Activated CD4-positive, alpha-beta T cell treated with anti-CD3 and anti-CD28 coated beads, Interleukin-2, amount 10 ng/mL, durations not matched to agents 7 days and 5 days (primary cell): ENCODE measurements at regions of chr9 and their contacts with region 1.

Region 1: DNA sequence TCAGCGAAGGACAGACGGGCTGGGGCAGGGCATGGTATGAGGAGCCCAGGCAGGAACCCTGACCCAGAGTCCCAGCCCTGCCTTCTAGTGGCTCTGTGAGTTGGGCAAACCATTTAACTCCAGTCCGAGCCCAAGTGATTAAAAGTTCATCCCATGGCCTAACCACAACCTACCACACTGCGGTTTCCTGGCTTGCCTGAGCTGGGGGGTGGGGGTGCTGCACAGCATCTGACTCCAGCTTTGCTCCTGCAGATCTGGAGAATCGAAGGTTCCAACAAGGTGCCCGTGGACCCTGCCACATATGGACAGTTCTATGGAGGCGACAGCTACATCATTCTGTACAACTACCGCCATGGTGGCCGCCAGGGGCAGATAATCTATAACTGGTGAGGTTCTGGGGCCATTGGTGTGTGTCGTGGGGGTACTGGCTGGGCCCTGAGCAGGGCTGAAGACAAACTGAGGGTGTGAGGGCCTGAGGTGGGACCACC is 49.0 kb downstream of the STOM start:
- DNase-seq: peak; percentile 28
- H3K4me3 Mint-ChIP-seq: no peak overlapping the region
- H3K27ac Mint-ChIP-seq: no peak overlapping the region
- H3K4me1 Mint-ChIP-seq: peaks cover 29% of the 10 kb centered on the region
- H3K27me3 Mint-ChIP-seq: no peaks in the 10 kb centered on the region

Region 2: GRCh38 chr9:120730661-120731514 is 590.2 kb before region 1 on chr9:
- CTCF ChIA-PET with region 1: no interaction called
- POLR2A ChIA-PET with region 1: no interaction called
- DNase-seq: no peak
- H3K4me3 Mint-ChIP-seq: no peak overlapping the region
- H3K27ac Mint-ChIP-seq: no peak overlapping the region
- H3K4me1 Mint-ChIP-seq: peaks cover 20% of the 10 kb centered on the region
- H3K27me3 Mint-ChIP-seq: no peaks in the 10 kb centered on the region

Region 3: GRCh38 chr9:121213136-121213806 is 107.8 kb before region 1 on chr9:
- CTCF ChIA-PET with region 1: interaction called, 15 read pairs
- POLR2A ChIA-PET with region 1: no interaction called
- DNase-seq: peak; percentile 66
- H3K4me3 Mint-ChIP-seq: no peak overlapping the region
- H3K27ac Mint-ChIP-seq: peak overlapping the region; percentile 25
- H3K4me1 Mint-ChIP-seq: peaks cover 24% of the 10 kb centered on the region
- H3K27me3 Mint-ChIP-seq: no peaks in the 10 kb centered on the region

Region 4: GRCh38 chr9:121344184-121344583 is 23.1 kb after region 1 on chr9:
- CTCF ChIA-PET with region 1: interaction called, 10 read pairs
- POLR2A ChIA-PET with region 1: no interaction called
- DNase-seq: no peak
- H3K4me3 Mint-ChIP-seq: no peak overlapping the region
- H3K27ac Mint-ChIP-seq: no peak overlapping the region
- H3K4me1 Mint-ChIP-seq: no peaks in the 10 kb centered on the region
- H3K27me3 Mint-ChIP-seq: no peaks in the 10 kb centered on the region

Region 5: DNA sequence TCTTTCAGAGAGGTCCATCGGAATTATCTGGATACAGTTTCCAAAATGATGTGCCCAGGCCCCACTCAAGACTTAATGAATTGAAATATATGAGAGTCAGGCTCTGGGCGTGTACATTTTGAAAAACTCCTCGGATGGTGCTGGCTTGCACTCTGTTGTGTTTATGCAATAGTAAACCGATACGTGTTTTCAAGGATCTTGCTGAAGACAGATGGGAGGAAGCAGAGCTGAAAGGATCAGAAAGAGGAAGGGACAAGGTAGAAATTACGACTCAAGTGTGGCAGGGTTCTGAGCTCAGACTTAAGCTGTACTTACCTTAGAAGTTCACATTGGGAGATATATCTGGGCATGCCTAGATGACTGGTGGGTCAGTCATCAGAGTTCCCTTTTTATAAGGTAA is 62.7 kb after region 1 on chr9:
- CTCF ChIA-PET with region 1: interaction called, 17 read pairs
- POLR2A ChIA-PET with region 1: no interaction called
- DNase-seq: no peak
- H3K4me3 Mint-ChIP-seq: no peak overlapping the region
- H3K27ac Mint-ChIP-seq: no peak overlapping the region
- H3K4me1 Mint-ChIP-seq: no peaks in the 10 kb centered on the region
- H3K27me3 Mint-ChIP-seq: peaks cover 15% of the 10 kb centered on the region

Region 6: GRCh38 chr9:121399883-121400607 is 79.0 kb after region 1 on chr9:
- CTCF ChIA-PET with region 1: interaction called, 108 read pairs
- POLR2A ChIA-PET with region 1: no interaction called
- DNase-seq: peak; percentile 39
- H3K4me3 Mint-ChIP-seq: no peak overlapping the region
- H3K27ac Mint-ChIP-seq: no peak overlapping the region
- H3K4me1 Mint-ChIP-seq: peaks cover 4% of the 10 kb centered on the region
- H3K27me3 Mint-ChIP-seq: peaks cover 20% of the 10 kb centered on the region

Region 7: GRCh38 chr9:121841771-121842611 is 520.9 kb after region 1 on chr9:
- CTCF ChIA-PET with region 1: no interaction called
- POLR2A ChIA-PET with region 1: no interaction called
- DNase-seq: no peak
- H3K4me3 Mint-ChIP-seq: no peak overlapping the region
- H3K27ac Mint-ChIP-seq: no peak overlapping the region
- H3K4me1 Mint-ChIP-seq: peaks cover 3% of the 10 kb centered on the region
- H3K27me3 Mint-ChIP-seq: peaks cover 2% of the 10 kb centered on the region